Sigmoid colon (tissue), 7 donors: ENCODE measurements at regions of chr1 and their contacts with region 1.

Region 1: GRCh38 chr1:6579374-6580118 is at the start of gene ZBTB48:
- DNase-seq: peak; percentile 100
- H3K4me3 ChIP-seq: peak within 1 kb of the TSS; percentile 79 to 93 (median 86)
- H3K27ac ChIP-seq: peak within 1 kb of the TSS; percentile 92 to 97 (median 94)
- H3K4me1 ChIP-seq: peaks cover 0 to 34% (median 29%) of the 10 kb centered on the region in 4 donors
- H3K27me3 ChIP-seq: no peaks in the 10 kb centered on the region
- CTCF ChIP-seq: no peak
- EP300 ChIP-seq: no peak
- POLR2A ChIP-seq: peak; percentile 95
- total RNA-seq, gene ZBTB48: 14.4 to 26.8 (median 16.3) TPM

Region 2: DNA sequence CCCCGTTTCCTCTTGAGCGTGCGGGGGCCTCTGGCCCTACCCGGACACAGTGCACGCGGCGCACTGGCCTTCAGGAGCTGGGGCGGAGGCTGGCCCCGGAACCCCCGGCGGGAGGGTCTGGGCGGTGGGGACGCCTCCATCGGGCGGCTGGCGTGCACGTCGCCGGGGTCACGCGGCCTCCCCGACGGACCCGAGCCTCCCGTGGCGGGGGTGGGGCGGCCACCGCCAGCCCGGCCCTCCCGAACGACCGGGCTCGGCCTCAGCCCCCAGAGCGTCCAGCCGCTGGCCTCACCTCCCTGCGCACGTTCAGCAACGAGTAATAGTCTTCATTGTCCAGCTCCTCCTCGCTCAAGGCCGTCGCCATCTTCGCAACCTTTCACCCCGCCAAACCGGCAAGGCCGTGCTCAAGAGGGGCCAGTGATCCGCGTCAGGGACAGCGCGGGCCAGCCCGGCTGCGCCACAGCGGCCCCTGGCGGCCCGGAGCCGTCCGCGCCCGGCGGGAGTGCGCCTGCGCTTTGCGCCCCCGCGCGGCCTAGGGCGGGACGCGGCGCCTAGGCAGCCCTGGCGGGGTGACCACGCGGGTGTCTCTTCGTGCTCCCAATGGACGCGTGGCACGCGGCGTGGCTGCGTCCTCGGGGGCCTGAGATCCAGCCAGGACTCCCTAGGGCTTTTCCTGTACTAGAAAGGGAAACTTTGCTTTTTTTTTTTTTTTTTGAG is 122.0 kb after region 1 on chr1 and contains the start of gene DNAJC11:
- intact Hi-C with region 1: loop called (anchors 5 kb)
- DNase-seq: peak; percentile 93
- H3K4me3 ChIP-seq: peak within 1 kb of the TSS; percentile 74 to 100 (median 99)
- H3K27ac ChIP-seq: peak within 1 kb of the TSS; percentile 80 to 93 (median 88)
- H3K4me1 ChIP-seq: peaks cover 0 to 55% (median 38%) of the 10 kb centered on the region in 4 donors
- H3K27me3 ChIP-seq: no peaks in the 10 kb centered on the region
- CTCF ChIP-seq: peak in 2 of 4 experiments; percentile 15 to 83
- EP300 ChIP-seq: no peak
- POLR2A ChIP-seq: no peak
- total RNA-seq, gene DNAJC11: 21.0 to 34.6 (median 23.8) TPM